ENCODE measurements at regions of chr5 and their contacts with region 1.

Region 1: GRCh38 chr5:159106569-159107282 is 7.0 kb upstream of the EBF1 start:
- DNase-seq: peak; percentile 79
- H3K4me3 Mint-ChIP-seq: peak overlapping the region; percentile 61
- H3K27ac Mint-ChIP-seq: no peak overlapping the region
- H3K4me1 Mint-ChIP-seq: peaks cover 28% of the 10 kb centered on the region
- H3K27me3 Mint-ChIP-seq: peaks cover 50% of the 10 kb centered on the region

Region 2: GRCh38 chr5:158074992-158075769 is 1031.5 kb before region 1 on chr5:
- CTCF ChIA-PET with region 1: interaction called, 37 read pairs
- POLR2A ChIA-PET with region 1: no interaction called
- intact Hi-C with region 1: loop called (anchors 10 kb)
- DNase-seq: peak; percentile 61
- H3K4me3 Mint-ChIP-seq: no peak overlapping the region
- H3K27ac Mint-ChIP-seq: no peak overlapping the region
- H3K4me1 Mint-ChIP-seq: peaks cover 5% of the 10 kb centered on the region
- H3K27me3 Mint-ChIP-seq: peaks cover 6% of the 10 kb centered on the region

Region 3: GRCh38 chr5:158174918-158175851 is 931.5 kb before region 1 on chr5:
- CTCF ChIA-PET with region 1: interaction called, 42 read pairs
- POLR2A ChIA-PET with region 1: no interaction called
- intact Hi-C with region 1: loop called (anchors 1 kb)
- DNase-seq: peak; percentile 61
- H3K4me3 Mint-ChIP-seq: no peak overlapping the region
- H3K27ac Mint-ChIP-seq: no peak overlapping the region
- H3K4me1 Mint-ChIP-seq: no peaks in the 10 kb centered on the region
- H3K27me3 Mint-ChIP-seq: no peaks in the 10 kb centered on the region

Region 4: DNA sequence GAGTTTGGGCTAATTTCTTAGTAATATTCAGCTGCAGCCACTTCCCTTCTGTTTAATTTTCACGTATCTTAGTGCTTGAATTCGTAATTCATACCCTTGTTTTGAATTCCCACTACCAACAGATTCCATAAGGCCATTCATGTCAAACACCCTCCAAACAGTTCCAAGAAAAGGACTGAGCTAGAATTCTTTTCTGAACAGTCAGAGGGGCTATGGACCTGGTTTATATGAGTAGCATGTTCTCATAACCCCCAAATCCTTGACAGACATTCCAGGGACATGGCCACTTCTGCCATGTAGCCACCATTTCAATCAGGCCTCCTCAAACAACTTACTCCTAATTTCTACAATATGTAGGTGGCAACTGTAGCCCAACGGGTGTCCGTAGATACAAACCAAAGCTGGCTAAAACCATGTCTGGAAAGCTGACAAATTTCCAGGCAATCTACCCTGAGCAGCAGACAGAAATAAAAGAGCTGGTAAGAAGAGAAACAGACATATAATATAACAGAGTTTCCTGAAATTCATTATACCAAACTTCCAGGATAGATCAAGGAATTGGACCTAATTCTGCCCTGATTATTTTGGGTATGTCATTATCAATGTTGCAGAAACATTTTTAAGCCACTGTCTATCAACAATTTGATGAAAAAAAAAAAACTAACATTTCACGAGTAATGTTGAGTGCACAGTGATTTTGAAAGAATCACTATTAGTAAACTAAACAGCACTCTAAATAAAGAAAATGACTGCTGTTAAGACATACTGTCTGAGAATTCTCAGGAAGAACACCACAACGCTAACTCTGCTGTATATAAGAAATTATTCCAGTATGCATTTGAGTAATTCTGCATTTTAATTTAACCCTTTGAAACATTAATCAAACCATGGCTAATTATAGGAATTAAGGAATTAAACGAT is 47.8 kb before region 1 on chr5:
- CTCF ChIA-PET with region 1: interaction called, 4 read pairs
- POLR2A ChIA-PET with region 1: no interaction called
- intact Hi-C with region 1: loop called (anchors 5 kb)
- DNase-seq: no peak
- H3K4me3 Mint-ChIP-seq: no peak overlapping the region
- H3K27ac Mint-ChIP-seq: no peak overlapping the region
- H3K4me1 Mint-ChIP-seq: peaks cover 2% of the 10 kb centered on the region
- H3K27me3 Mint-ChIP-seq: peaks cover 28% of the 10 kb centered on the region

Region 5: DNA sequence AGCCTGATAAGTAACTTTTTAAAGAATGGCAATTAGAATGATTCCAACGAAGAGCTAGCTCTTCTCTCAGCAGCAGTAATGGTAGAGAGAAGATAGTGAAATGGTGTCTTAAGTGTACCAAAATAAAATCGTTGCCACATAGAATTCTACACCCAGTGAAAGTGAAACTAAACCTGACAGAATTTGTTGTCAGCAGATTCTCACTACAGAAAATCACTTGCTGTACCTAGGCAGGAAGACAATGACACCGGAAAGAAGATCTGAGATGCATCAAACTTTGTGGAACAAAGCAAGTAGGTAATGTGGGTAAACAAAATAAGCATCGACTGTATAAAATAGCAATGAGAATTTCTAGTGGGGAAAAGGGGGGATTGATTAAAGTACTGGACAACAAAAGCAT is 13.7 kb after region 1 on chr5:
- CTCF ChIA-PET with region 1: interaction called, 10 read pairs
- POLR2A ChIA-PET with region 1: no interaction called
- intact Hi-C with region 1: no loop called
- DNase-seq: no peak
- H3K4me3 Mint-ChIP-seq: peak overlapping the region; percentile 34
- H3K27ac Mint-ChIP-seq: peak overlapping the region; percentile 57
- H3K4me1 Mint-ChIP-seq: peaks cover 17% of the 10 kb centered on the region
- H3K27me3 Mint-ChIP-seq: no peaks in the 10 kb centered on the region

Region 6: DNA sequence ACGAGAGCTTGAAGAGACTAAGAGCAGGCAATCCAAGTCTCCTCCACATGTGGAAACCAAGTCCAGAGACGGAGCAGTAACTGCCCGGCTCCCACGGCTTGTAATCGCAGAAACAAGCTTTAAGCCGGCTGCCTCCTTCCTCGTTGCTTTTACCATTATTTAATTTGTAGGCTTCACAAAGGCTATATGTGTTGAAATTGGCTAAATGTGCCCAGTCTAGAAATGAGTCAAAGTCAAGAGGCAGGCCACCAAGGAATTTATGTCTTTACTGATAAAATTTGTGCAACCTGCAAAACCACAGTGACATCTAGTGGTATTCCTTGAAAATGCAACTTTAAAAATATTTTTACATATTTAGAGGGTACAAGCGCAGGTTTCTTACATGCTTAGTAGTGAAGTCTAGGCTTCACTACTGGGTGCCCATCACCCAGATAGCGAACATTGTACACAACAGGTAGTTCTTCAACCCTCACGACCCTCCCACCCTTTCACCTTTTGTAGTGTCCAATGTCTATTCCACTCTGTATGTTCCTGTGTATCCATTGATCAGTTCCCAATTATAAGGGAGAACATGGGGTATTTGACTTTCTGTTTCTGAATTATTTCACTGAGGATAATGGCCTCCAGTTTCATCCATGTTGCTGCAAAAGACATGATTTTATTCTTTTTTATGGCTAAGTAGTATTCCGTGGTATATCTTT is 26.5 kb after region 1 on chr5:
- CTCF ChIA-PET with region 1: interaction called, 19 read pairs
- POLR2A ChIA-PET with region 1: no interaction called
- intact Hi-C with region 1: loop called (anchors 2 kb)
- DNase-seq: no peak
- H3K4me3 Mint-ChIP-seq: no peak overlapping the region
- H3K27ac Mint-ChIP-seq: no peak overlapping the region
- H3K4me1 Mint-ChIP-seq: no peaks in the 10 kb centered on the region
- H3K27me3 Mint-ChIP-seq: peaks cover 1% of the 10 kb centered on the region

Measured in activated CD4-positive, alpha-beta memory T cell treated with anti-CD3 and anti-CD28 coated beads for 36 hours (primary cell).